Activated CD4-positive, alpha-beta T cell treated with anti-CD3 and anti-CD28 coated beads, Interleukin-2, amount 10 ng/mL, durations not matched to agents 24 days and 14 days (primary cell): ENCODE measurements at regions of chr6 and their contacts with region 1.

Region 1: GRCh38 chr6:137823826-137824555 is 43.1 kb upstream of the TNFAIP3 start:
- DNase-seq: peak; percentile 94
- H3K4me3 Mint-ChIP-seq: peak overlapping the region; percentile 76
- H3K27ac Mint-ChIP-seq: peak overlapping the region; percentile 98
- H3K4me1 Mint-ChIP-seq: peaks cover 71% of the 10 kb centered on the region
- H3K27me3 Mint-ChIP-seq: no peaks in the 10 kb centered on the region

Region 2: GRCh38 chr6:137717074-137718073 is 106.6 kb before region 1 on chr6:
- intact Hi-C with region 1: loop called (anchors 1 kb)
- DNase-seq: peak; percentile 95
- H3K4me3 Mint-ChIP-seq: peak overlapping the region; percentile 13
- H3K27ac Mint-ChIP-seq: peak overlapping the region; percentile 91
- H3K4me1 Mint-ChIP-seq: peaks cover 51% of the 10 kb centered on the region
- H3K27me3 Mint-ChIP-seq: no peaks in the 10 kb centered on the region

Region 3: DNA sequence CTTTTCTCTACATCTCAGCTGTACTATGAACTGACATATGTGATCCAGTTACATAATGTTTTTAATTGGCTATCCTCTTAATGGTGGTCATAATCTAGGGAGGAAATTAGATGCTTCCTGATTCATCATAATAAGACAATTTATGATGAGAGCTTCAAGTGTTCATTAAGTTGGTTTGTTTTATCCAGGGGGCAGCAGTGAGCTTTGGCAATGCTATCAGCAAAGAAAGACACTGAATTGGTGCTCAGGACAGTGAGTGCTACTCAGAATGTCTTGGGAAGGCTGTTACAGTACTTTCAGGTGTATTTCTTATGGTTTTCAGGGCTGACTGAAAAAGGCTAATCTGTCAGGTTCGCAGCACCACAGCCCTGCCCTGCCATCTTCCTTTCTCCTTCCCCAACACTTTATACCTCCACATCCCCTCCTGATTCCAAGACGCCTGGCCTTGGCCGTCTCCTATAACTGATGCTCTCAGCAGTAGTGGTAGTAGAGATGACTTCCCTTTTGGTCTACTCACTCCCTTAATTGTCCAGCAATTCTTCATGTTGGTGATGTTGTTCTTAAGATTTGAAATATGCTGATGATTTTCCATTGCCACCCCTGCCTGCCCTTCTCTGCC is 23.9 kb before region 1 on chr6:
- intact Hi-C with region 1: loop called (anchors 2 kb)
- DNase-seq: peak; percentile 83
- H3K4me3 Mint-ChIP-seq: peak overlapping the region; percentile 18
- H3K27ac Mint-ChIP-seq: peak overlapping the region; percentile 81
- H3K4me1 Mint-ChIP-seq: peaks cover 54% of the 10 kb centered on the region
- H3K27me3 Mint-ChIP-seq: no peaks in the 10 kb centered on the region

Region 4: DNA sequence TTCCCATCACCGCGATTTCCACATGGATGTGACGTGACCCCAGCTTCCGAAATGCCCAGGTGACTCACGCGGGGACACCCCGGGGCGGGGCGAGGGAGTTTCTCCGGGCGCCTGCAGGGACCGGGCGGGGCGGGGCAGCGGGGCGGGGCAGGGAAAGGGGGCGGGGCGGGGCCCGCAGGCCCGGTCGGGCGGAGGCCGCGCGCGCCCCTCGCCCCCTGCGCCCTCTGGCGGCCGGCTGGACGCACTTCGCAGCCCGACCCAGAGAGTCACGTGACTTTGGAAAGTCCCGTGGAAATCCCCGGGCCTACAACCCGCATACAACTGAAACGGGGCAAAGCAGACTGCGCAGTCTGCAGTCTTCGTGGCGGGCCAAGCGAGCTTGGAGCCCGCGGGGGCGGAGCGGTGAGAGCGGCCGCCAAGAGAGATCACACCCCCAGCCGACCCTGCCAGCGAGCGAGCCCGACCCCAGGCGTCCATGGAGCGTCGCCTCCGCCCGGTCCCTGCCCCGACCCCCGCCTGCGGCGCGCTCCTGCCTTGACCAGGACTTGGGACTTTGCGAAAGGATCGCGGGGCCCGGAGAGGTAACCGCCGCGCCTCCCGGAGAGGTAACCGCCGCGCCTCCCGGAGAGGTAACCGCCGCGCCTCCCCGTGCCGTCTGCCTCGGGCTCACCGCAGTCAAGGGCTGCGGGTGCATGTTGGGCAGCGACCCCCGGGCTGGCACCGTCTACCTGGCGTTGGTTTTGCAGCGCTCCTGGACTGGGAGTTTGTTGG is 43.1 kb after region 1 on chr6 and contains the start of gene TNFAIP3:
- intact Hi-C with region 1: loop called (anchors 1 kb)
- DNase-seq: peak; percentile 99
- H3K4me3 Mint-ChIP-seq: peak within 1 kb of the TSS; percentile 87
- H3K27ac Mint-ChIP-seq: peak within 1 kb of the TSS; percentile 93
- H3K4me1 Mint-ChIP-seq: peaks cover 25% of the 10 kb centered on the region
- H3K27me3 Mint-ChIP-seq: no peaks in the 10 kb centered on the region
- total RNA-seq, gene TNFAIP3: 249 and 254 TPM in 2 replicates

Region 5: GRCh38 chr6:137896647-137897046 is 72.7 kb after region 1 on chr6:
- intact Hi-C with region 1: no loop called
- DNase-seq: no peak
- H3K4me3 Mint-ChIP-seq: no peak overlapping the region
- H3K27ac Mint-ChIP-seq: no peak overlapping the region
- H3K4me1 Mint-ChIP-seq: peaks cover 8% of the 10 kb centered on the region
- H3K27me3 Mint-ChIP-seq: no peaks in the 10 kb centered on the region